PC-9 (cell line): ENCODE measurements at regions of chr3 and their contacts with region 1.

Region 1: GRCh38 chr3:171459942-171460724 is at the start of gene TNIK:
- DNase-seq: peak; percentile 87 to 94
- H3K4me3 ChIP-seq: peak within 1 kb of the TSS; percentile 69
- H3K27ac ChIP-seq: peak within 1 kb of the TSS; percentile 50
- H3K4me1 ChIP-seq: peaks cover 46% of the 10 kb centered on the region
- H3K27me3 ChIP-seq: no peaks in the 10 kb centered on the region
- CTCF ChIP-seq: peak; percentile 38; the same call in 1 of the 2 replicates
- total RNA-seq, gene TNIK: 28.8 and 30.7 TPM in 2 replicates

Region 2: GRCh38 chr3:171132873-171133272 is 327.3 kb before region 1 on chr3:
- CTCF ChIA-PET with region 1: interaction called, 18 read pairs
- POLR2A ChIA-PET with region 1: no interaction called
- intact Hi-C with region 1: no loop called
- DNase-seq: no peak
- H3K4me3 ChIP-seq: no peak overlapping the region
- H3K27ac ChIP-seq: no peak overlapping the region
- H3K4me1 ChIP-seq: no peaks in the 10 kb centered on the region
- H3K27me3 ChIP-seq: no peaks in the 10 kb centered on the region
- CTCF ChIP-seq: no peak

Region 3: GRCh38 chr3:171187706-171188290 is 272.3 kb before region 1 on chr3:
- CTCF ChIA-PET with region 1: no interaction called
- POLR2A ChIA-PET with region 1: no interaction called
- intact Hi-C with region 1: loop called (anchors 1 kb)
- DNase-seq: peak in 1 of 2 experiments; percentile 50
- H3K4me3 ChIP-seq: no peak overlapping the region
- H3K27ac ChIP-seq: no peak overlapping the region
- H3K4me1 ChIP-seq: peaks cover 44% of the 10 kb centered on the region
- H3K27me3 ChIP-seq: no peaks in the 10 kb centered on the region
- CTCF ChIP-seq: peak; percentile 81

Region 4: DNA sequence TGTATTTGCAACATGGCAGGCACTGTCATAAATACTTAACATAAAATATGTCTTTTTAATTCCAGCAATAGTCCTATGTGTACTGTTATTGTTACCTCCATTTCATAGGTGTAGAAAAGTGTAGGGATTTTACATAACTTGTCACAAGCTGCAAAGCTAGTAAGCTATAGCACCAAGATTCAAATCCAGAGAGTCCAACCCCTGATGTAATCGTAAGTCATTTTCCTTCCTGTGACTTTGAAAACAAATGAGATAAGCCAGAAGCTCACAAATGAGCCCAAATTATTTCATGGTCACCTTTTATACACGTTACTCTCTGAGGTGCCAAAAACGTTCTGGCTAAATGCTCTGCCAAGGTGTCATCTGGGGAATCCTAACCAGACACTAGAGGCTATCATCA is 23.8 kb before region 1 on chr3:
- CTCF ChIA-PET with region 1: no interaction called
- POLR2A ChIA-PET with region 1: no interaction called
- intact Hi-C with region 1: no loop called
- DNase-seq: no peak
- H3K4me3 ChIP-seq: no peak overlapping the region
- H3K27ac ChIP-seq: no peak overlapping the region
- H3K4me1 ChIP-seq: no peaks in the 10 kb centered on the region
- H3K27me3 ChIP-seq: no peaks in the 10 kb centered on the region
- CTCF ChIP-seq: no peak

Region 5: GRCh38 chr3:171566803-171567422 is 106.8 kb after region 1 on chr3:
- CTCF ChIA-PET with region 1: no interaction called
- POLR2A ChIA-PET with region 1: no interaction called
- intact Hi-C with region 1: loop called (anchors 5 kb)
- DNase-seq: peak in 1 of 2 experiments; percentile 45
- H3K4me3 ChIP-seq: no peak overlapping the region
- H3K27ac ChIP-seq: no peak overlapping the region
- H3K4me1 ChIP-seq: peaks cover 30% of the 10 kb centered on the region
- H3K27me3 ChIP-seq: no peaks in the 10 kb centered on the region
- CTCF ChIP-seq: peak; percentile 96